Activated CD4-positive, alpha-beta T cell treated with anti-CD3 and anti-CD28 coated beads, Interleukin-2, amount 10 ng/mL, durations not matched to agents 24 days and 14 days (primary cell): ENCODE measurements at regions of chr4 and their contacts with region 1.

Region 1: DNA sequence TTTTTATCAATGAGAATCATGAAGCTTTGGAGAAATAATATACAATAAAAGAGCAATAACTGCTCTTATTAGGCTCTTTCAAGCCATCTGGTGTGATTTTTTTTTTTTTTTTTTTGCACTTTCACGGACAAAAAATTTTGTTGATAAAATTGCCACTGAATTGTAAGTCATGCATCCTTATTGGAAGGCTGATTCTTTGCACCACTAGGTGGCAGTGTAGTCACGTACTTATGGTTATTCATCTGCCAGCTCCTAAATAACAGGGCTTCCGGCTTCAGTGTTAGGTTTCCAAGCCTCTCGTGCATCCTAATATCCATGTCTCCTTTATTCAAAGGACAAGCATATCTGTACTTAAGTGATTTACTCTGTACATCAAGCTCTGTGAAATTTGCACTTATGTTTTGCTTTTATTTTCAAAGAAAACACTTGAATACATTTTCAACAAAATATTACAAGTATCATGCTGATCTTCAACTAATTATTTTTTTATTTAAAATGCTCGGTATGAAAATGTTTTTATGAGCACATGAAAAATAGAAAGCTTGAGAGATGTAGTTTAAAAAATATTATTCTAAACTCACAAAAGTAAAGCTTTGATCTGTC is 1578.3 kb upstream of the TENM3 start:
- DNase-seq: peak; percentile 85
- H3K4me3 Mint-ChIP-seq: no peak overlapping the region
- H3K27ac Mint-ChIP-seq: no peak overlapping the region
- H3K4me1 Mint-ChIP-seq: no peaks in the 10 kb centered on the region
- H3K27me3 Mint-ChIP-seq: no peaks in the 10 kb centered on the region

Region 2: GRCh38 chr4:179867300-179867878 is 797.5 kb before region 1 on chr4:
- intact Hi-C with region 1: loop called (anchors 5 kb)
- DNase-seq: peak; percentile 65
- H3K4me3 Mint-ChIP-seq: no peak overlapping the region
- H3K27ac Mint-ChIP-seq: no peak overlapping the region
- H3K4me1 Mint-ChIP-seq: no peaks in the 10 kb centered on the region
- H3K27me3 Mint-ChIP-seq: no peaks in the 10 kb centered on the region

Region 3: GRCh38 chr4:180675359-180675650 is 10.4 kb after region 1 on chr4:
- intact Hi-C with region 1: loop called (anchors 1 kb)
- DNase-seq: no peak
- H3K4me3 Mint-ChIP-seq: no peak overlapping the region
- H3K27ac Mint-ChIP-seq: no peak overlapping the region
- H3K4me1 Mint-ChIP-seq: no peaks in the 10 kb centered on the region
- H3K27me3 Mint-ChIP-seq: no peaks in the 10 kb centered on the region

Region 4: DNA sequence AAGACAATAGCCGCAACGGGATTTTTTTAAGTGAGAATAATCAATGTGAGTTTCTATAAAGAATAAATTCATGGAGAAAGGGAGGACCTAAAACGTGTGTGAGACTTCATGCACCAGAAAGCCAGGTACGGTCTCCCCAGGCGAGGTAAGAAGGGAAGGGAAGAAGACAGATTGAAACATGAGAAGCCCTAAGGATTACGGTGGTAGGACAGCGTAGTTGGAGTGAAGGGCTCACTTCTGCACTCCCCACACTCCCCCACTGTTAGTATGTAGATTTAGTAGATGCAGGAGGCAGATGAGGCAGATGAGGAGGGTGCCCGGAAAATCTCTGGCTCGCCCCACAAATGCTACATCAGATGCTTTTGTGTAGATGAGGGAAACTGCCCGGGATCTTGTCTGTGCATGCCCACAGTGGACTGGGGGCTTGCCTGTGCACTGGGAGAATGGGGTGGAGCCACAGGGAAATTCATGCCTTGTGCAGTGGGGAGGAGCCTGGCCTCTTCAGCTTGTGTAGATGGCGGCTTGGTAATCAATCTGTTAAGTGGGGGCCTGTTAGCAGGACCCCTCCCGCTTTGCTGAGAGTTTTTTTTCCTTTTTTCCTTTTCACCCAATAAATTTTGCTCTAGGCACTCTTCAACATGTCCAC is 33.8 kb after region 1 on chr4:
- intact Hi-C with region 1: no loop called
- DNase-seq: no peak
- H3K4me3 Mint-ChIP-seq: no peak overlapping the region
- H3K27ac Mint-ChIP-seq: no peak overlapping the region
- H3K4me1 Mint-ChIP-seq: no peaks in the 10 kb centered on the region
- H3K27me3 Mint-ChIP-seq: no peaks in the 10 kb centered on the region

Region 5: GRCh38 chr4:181319629-181320028 is 654.8 kb after region 1 on chr4:
- intact Hi-C with region 1: loop called (anchors 10 kb)
- DNase-seq: no peak
- H3K4me3 Mint-ChIP-seq: no peak overlapping the region
- H3K27ac Mint-ChIP-seq: no peak overlapping the region
- H3K4me1 Mint-ChIP-seq: no peaks in the 10 kb centered on the region
- H3K27me3 Mint-ChIP-seq: no peaks in the 10 kb centered on the region